Right ventricle myocardium inferior (tissue), 1 donor: ENCODE measurements at regions of chr9 and their contacts with region 1.

Region 1: DNA sequence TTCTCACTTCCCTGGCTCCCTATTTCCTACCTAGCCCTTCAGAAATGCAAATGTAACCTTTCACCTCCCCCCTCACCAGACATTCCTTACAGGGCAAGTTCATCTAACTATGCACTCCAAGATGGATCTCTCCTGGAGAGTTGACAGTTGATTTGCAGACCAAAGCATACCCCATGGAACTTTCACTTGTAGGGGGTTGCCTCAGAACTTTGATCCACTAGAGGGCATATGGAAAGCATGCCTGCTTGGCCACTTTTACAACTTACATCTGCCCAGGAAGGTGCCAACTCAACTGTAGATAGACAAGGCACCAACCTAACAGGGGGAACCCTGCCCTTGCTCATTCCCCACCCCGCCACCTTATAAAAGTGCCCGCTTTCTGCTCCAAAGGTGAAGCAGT is 187.8 kb downstream of the NXNL2 start:
- DNase-seq: no peak
- ATAC-seq: no peak

Region 2: DNA sequence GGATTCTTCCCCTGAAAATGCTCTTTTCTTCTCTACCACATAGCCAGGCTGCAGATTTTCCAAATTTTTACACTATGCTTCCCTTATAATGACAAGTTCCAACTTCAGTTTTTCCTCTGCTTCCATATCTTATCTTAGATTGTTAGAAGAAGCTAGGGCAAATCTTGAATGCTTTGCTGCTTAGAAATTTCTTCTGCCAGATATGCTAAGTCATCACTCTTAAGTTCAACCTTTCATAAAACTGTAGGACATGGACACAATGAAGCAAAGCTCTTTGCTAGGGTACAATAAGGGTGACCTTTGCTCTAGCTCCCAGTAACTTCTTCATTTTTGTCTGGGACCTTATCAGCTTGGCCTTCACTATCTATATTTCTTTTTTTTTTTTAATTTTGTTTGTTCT is 99.1 kb before region 1 on chr9:
- intact Hi-C with region 1: no loop called
- DNase-seq: no peak
- ATAC-seq: no peak

Region 3: DNA sequence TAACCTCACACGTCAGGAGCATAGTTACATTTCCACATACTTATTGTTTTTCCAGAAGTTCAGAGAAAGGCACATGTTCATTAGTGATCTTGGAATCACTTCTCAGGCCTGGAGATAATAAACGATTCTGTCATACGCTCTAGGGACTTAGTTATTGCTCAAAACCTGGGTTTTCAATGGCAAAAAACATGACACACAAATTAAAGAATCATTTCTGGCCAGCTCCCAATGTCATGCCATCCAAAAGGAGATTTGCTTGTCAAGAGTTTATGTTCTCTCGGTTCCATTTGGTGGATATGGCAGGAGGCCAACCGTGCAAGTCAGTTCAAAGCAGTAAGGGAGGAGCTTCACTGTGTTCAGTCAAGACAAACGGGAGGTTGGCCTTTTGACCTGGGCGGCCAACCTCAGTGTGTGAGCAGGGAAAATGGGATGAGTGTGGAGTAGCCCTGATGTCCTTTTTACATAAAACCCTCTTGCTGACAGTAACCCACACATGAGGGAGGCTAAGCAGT is 64.4 kb before region 1 on chr9:
- intact Hi-C with region 1: loop called (anchors 5 kb)
- DNase-seq: no peak
- ATAC-seq: peak; percentile 84